Activated CD4-positive, alpha-beta T cell treated with anti-CD3 and anti-CD28 coated beads, Interleukin-2, amount 10 ng/mL, durations not matched to agents 24 days and 14 days (primary cell): ENCODE measurements at regions of chr11 and their contacts with region 1.

Region 1: DNA sequence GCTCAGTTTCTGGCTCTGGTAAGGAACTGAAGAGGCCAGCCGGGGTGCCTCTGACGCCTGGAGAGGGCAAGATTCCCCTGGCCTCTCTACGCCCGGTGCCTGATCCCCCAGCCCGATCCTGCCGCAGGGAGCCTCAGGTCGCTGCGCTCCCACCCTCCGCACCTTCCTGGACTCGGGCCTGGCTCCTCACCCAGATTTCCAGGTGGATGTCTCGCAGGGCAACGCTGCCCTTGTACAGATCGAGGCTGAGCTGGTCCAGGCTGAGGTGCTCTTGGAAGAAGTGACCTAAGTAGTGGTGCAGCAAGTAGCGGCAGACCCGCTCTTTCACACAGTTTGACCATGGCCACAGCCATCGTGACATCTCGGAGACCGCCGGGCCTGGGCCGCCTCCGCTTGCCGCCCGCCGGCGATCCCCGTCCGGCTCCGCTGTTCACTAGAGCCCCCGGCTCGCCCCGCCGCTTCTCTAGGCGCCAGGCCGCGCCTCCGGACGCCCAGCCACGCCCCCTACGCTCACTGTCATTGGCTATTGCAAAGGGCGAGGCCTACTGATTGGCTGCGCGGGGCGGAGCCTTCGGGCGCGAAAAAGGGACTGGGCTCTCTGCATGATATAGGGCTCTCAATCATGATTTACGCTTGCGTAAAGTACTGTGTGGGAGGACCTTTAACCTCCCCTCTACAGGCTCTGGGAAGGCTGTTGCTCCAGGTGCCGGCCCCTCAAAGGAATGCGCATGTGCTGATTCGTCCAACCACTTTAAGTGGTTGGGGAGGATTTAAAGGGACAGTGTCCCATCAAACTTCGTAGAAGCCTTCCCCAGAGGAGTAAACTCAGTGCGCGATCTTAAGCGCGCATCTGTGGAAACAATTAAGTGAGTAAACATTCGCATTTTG is at the start of gene ATG2A:
- DNase-seq: peak; percentile 100
- H3K4me3 Mint-ChIP-seq: peak within 1 kb of the TSS; percentile 90
- H3K27ac Mint-ChIP-seq: peak within 1 kb of the TSS; percentile 92
- H3K4me1 Mint-ChIP-seq: peaks cover 23% of the 10 kb centered on the region
- H3K27me3 Mint-ChIP-seq: no peaks in the 10 kb centered on the region
- total RNA-seq, gene ATG2A: 22.5 and 23.1 TPM in 2 replicates

Region 2: DNA sequence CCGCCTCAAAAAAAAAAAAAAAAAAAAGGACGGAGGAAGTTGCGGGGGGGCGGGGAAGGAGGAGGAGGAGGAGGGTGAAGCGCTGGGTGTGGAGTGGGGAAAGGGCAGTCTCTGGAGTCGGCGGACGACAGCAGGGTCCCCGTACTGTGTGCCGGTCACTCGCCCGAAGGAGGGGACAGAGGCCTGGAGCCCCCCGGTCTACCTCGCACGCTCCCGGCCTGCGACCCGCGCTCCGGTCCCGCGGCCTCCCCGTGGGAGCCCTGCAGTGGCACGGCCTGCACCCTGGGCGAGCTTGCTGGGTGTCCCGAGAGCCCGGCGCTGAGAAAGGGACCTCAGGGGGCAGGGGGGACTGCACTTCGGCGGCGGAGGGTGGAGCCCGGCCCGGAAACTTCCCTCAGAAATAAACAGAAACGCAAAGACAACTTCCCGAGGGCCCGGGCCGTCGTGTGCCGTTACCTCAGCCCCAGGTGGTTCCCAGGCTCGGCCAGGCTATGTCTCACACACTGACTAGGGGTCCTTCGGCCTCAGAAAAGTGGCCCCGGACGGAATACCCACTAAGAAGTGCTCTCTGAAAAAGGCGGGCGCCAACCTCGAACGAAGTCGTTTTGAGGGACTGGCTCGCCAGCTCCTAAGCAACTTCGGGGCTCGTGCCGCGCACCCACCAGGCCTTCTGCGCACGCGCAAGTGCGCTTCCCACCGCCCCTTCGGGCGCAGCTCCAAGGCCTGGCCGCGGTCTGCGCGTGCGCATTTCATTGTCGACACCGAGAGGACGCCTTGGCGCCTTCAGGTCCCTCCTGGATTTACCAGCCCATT is 54.6 kb after region 1 on chr11 and contains the start of gene MAJIN:
- intact Hi-C with region 1: loop called (anchors 5 kb)
- DNase-seq: peak; percentile 94
- H3K4me3 Mint-ChIP-seq: peak within 1 kb of the TSS; percentile 63
- H3K27ac Mint-ChIP-seq: peak within 1 kb of the TSS; percentile 83
- H3K4me1 Mint-ChIP-seq: peaks cover 18% of the 10 kb centered on the region
- H3K27me3 Mint-ChIP-seq: no peaks in the 10 kb centered on the region
- total RNA-seq, gene MAJIN: 0.71 TPM in 1 of 2 replicates, not detected in the other